ENCODE measurements at regions of chr3 and their contacts with region 1.

Region 1: GRCh38 chr3:61381745-61382392 is 130.6 kb upstream of the FHIT start:
- DNase-seq: peak; percentile 2 to 32 (median 20)
- H3K4me3 ChIP-seq: no peak overlapping the region
- H3K4me3 Mint-ChIP-seq: no peak overlapping the region
- H3K27ac ChIP-seq: no peak overlapping the region
- H3K27ac Mint-ChIP-seq: no peak overlapping the region
- H3K4me1 ChIP-seq: no peaks in the 10 kb centered on the region
- H3K4me1 Mint-ChIP-seq: no peaks in the 10 kb centered on the region
- H3K27me3 ChIP-seq: no peaks in the 10 kb centered on the region
- H3K27me3 Mint-ChIP-seq: peaks cover 2 to 3% (median 2%) of the 10 kb centered on the region in 3 donors
- CTCF ChIP-seq: peak; percentile 80

Region 2: GRCh38 chr3:59575113-59576001 is 1806.5 kb before region 1 on chr3:
- intact Hi-C with region 1: loop called in 1 of 2 experiments (anchors 5 kb)
- DNase-seq: peak; percentile 43 to 64 (median 60)
- H3K4me3 ChIP-seq: no peak overlapping the region
- H3K4me3 Mint-ChIP-seq: no peak overlapping the region
- H3K27ac ChIP-seq: no peak overlapping the region
- H3K27ac Mint-ChIP-seq: no peak overlapping the region
- H3K4me1 ChIP-seq: no peaks in the 10 kb centered on the region
- H3K4me1 Mint-ChIP-seq: no peaks in the 10 kb centered on the region
- H3K27me3 ChIP-seq: no peaks in the 10 kb centered on the region
- H3K27me3 Mint-ChIP-seq: peaks cover 1 to 4% (median 1%) of the 10 kb centered on the region in 3 donors
- CTCF ChIP-seq: peak; percentile 98

Measured in CD14-positive monocyte (primary cell).